ENCODE measurements at regions of chr1 and their contacts with region 1.

Region 1: DNA sequence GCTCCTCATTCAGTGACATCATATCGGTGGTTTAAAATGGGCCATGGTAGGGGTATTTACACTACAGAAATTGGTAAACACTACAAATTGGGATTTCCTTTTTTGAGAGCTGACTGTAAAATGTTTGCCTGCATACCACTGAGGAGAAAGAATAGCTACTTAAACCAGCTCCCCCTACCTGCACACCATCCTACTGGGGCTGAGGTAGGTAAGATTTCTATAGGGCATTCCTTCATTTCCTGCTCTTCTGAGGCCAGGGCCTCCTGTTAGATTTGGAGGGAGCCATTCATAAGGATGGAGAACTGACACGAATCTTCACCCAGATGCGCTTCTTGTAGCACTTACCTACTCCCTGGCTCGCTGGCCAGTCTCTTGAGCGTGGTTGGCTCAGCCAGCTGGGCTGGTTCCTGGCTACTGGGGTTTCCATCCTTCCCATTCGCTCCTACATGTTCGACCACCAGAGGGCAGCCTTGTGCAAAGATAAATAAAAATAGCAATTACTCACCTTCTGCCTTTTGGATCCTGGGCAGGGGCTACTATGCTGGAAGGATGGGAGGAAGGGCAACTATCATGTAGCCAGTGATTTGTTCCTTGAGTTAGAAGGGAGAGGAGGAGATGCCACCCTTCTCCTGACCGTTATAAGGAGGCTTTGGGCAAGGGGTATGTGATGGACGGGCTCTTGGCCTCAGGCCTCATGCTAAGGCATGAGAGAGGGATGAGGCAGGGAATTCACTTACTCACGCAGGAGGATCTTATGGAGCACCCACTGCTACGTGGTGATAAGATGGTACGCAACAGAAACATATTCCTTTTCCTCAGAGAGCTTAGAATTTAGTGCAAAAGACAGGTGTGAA is 10.7 kb downstream of the OPTC start:
- DNase-seq: peak; percentile 50 to 89 (median 72)
- ATAC-seq: peak; percentile 65
- H3K4me3 ChIP-seq: no peak overlapping the region
- H3K4me3 Mint-ChIP-seq: no peak overlapping the region
- H3K27ac ChIP-seq: no peak overlapping the region
- H3K27ac Mint-ChIP-seq: no peak overlapping the region
- H3K4me1 ChIP-seq: peaks cover 5% of the 10 kb centered on the region
- H3K4me1 Mint-ChIP-seq: peaks cover 6% of the 10 kb centered on the region
- H3K27me3 ChIP-seq: no peaks in the 10 kb centered on the region
- H3K27me3 Mint-ChIP-seq: no peaks in the 10 kb centered on the region
- CTCF ChIP-seq: peak; percentile 81

Region 2: GRCh38 chr1:203593723-203594122 is 89.1 kb after region 1 on chr1:
- CTCF ChIA-PET with region 1: no interaction called
- POLR2A ChIA-PET with region 1: no interaction called
- intact Hi-C with region 1: loop called in 1 of 2 experiments (anchors 5 kb)
- DNase-seq: peak; percentile 35 to 75 (median 64)
- ATAC-seq: peak; percentile 85
- H3K4me3 ChIP-seq: no peak overlapping the region
- H3K4me3 Mint-ChIP-seq: no peak overlapping the region
- H3K27ac ChIP-seq: no peak overlapping the region
- H3K27ac Mint-ChIP-seq: no peak overlapping the region
- H3K4me1 ChIP-seq: peaks cover 9% of the 10 kb centered on the region
- H3K4me1 Mint-ChIP-seq: peaks cover 5% of the 10 kb centered on the region
- H3K27me3 ChIP-seq: no peaks in the 10 kb centered on the region
- H3K27me3 Mint-ChIP-seq: no peaks in the 10 kb centered on the region
- CTCF ChIP-seq: peak; percentile 52

Region 3: DNA sequence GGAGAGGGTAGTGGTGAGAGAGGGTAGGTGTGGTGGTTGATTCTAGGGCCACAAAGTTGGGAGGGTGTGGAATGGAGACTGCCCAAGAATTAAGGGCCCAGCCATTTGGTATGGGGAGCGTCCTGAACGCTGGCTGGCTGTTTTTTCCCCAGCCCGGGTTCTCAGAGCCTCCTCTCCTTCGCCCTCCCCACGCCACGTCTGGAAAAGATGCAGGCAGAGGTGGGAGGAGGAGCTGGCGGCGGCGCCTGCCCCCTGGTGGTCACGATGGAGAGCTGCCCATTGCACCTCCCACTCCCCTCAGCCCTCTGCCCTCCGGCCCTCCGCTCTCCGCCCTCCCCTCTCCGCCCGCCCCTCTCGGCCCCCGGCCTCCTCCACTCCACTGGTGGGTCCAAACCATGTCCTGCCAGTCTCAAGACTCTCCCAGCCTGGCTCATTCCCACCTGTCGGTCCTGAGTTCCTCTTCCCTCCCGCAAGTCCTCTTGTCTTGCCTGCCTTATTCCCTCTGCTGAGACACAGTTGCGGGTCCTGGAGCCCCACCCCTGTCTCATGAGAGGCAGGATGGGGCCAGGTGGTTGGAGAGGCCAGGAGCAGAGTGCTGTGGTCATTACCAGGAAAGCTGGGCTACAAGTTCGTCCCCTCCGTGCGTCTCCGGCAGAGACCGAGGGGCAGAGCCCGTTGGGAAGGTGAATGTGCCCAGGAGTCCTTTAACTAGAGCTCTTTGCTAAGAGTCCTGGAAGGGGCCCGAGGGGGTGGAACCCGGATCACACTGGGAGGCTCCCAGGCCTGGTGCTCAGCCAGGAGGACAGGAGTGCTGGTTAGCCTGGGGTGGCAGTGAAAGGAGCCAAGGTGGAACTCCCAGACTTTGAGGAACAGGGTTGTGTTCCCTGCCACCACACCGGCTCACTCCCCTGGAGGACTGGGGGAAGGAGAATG is 624.6 kb after region 1 on chr1:
- CTCF ChIA-PET with region 1: interaction called, 3 read pairs
- POLR2A ChIA-PET with region 1: no interaction called
- intact Hi-C with region 1: loop called (anchors 2 kb)
- DNase-seq: peak; percentile 27 to 85 (median 42)
- ATAC-seq: peak; percentile 87
- H3K4me3 ChIP-seq: no peak overlapping the region
- H3K4me3 Mint-ChIP-seq: no peak overlapping the region
- H3K27ac ChIP-seq: no peak overlapping the region
- H3K27ac Mint-ChIP-seq: no peak overlapping the region
- H3K4me1 ChIP-seq: peaks cover 11% of the 10 kb centered on the region
- H3K4me1 Mint-ChIP-seq: peaks cover 9% of the 10 kb centered on the region
- H3K27me3 ChIP-seq: no peaks in the 10 kb centered on the region
- H3K27me3 Mint-ChIP-seq: no peaks in the 10 kb centered on the region
- CTCF ChIP-seq: peak; percentile 87